MCF 10A (cell line): ENCODE measurements at regions of chr5 and their contacts with region 1.

Region 1: DNA sequence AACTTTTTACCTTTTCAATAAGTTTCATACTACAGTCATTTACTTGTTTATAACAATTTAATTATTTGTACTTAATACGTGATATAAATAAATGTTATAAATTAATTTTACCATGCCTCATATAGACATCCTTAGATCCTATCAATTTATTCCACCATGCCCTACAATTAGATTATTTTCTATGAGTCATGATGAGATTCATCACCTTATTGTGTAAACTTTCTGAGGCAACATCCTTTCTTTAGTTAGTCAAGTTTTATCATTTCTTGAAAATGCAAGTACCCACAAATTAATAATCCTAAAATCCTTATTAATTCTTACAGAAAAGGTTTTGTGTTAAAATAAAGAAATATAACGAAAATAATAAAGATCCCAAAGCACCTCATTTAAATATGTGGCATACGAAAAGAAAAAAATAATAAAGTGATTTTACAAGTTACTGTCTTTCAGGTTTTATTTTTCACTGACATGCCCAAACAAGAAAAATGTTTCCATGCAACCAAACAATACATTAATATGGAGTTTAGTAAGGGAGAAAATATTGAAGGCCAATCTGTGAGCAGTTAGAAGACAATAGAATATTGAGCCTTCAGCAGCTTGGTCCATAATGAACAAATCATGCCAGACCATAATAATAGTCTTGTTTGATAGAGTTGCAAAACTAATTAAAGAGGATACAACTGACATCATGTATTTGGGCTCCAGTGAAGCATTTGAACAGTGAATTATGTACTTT is 188.7 kb upstream of the MRPS30 start:
- DNase-seq: peak; percentile 47
- H3K4me3 Mint-ChIP-seq: no peak overlapping the region
- H3K27ac Mint-ChIP-seq: peak overlapping the region; percentile 85
- H3K4me1 Mint-ChIP-seq: peaks cover 7% of the 10 kb centered on the region
- H3K27me3 Mint-ChIP-seq: no peaks in the 10 kb centered on the region
- CTCF ChIP-seq: no peak

Region 2: DNA sequence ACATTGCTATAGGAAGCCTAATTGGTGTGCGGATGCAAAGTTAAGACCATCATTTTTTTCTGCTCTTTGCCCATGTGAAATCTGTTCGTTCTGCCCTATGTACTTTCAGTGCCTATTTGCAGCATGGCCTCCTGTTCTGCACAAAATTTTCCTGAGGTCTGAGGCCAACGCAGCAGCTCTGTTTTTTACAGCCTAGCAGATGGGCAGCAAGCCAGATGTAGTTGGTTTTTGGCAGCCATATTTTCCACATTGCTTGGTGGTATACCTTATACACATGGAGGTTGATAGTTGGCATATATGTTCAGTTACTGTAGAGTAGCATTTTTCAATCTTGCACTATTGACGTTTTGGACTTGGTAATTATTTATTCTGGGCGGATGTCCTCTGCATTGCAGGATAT is 55.3 kb after region 1 on chr5:
- CTCF ChIA-PET with region 1: no interaction called
- POLR2A ChIA-PET with region 1: no interaction called
- intact Hi-C with region 1: loop called (anchors 10 kb)
- DNase-seq: no peak
- H3K4me3 Mint-ChIP-seq: no peak overlapping the region
- H3K27ac Mint-ChIP-seq: no peak overlapping the region
- H3K4me1 Mint-ChIP-seq: no peaks in the 10 kb centered on the region
- H3K27me3 Mint-ChIP-seq: no peaks in the 10 kb centered on the region
- CTCF ChIP-seq: no peak